ENCODE measurements at regions of chr9 and their contacts with region 1.

Region 1: DNA sequence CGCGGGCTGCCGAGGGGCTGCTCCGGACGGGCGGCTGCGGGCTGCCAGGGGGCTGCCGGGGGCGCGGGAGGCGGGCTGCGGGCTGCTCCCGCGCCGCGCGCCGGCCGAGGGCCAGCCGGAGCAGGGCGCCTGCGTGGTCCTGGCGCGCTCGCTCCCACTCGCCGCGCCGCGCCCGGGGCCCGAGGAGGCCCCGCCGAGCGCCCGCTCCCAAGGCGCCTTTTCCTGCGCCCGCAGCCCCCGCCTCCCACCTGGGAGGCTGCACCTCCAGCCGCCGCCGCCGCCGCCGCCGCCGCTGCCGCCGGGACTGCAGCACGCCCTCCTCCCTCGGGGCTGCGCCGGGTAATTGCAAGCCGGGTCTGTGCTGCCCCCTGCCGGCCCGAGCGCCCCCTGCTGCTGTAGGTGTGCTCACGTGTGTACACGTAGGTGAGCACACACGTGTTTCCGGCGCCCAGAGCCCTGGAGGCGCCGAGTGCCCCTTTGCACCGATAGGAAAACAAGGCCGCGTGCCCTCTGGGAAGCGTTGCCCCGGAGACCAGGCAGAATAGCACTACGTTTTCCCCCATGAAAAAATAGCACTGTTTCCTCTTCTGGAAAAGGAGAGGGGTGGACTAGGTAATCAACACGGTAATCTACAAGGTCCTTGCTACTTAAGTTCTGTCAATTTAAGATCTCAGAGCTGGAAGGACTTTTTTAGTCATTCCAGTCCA is at the start of gene EPB41L4B:
- DNase-seq: peak; percentile 86
- H3K4me3 Mint-ChIP-seq: peak within 1 kb of the TSS; percentile 79
- H3K27ac Mint-ChIP-seq: no peak within 1 kb of the TSS
- H3K4me1 Mint-ChIP-seq: peaks cover 8% of the 10 kb centered on the region
- H3K27me3 Mint-ChIP-seq: peaks cover 60% of the 10 kb centered on the region
- total RNA-seq, gene EPB41L4B: 1.5 and 1.6 TPM in 2 replicates

Region 2: GRCh38 chr9:107489687-107490605 is 1830.9 kb before region 1 on chr9 and contains the start of gene KLF4:
- intact Hi-C with region 1: loop called (anchors 10 kb)
- DNase-seq: peak; percentile 68
- H3K4me3 Mint-ChIP-seq: peak within 1 kb of the TSS; percentile 71
- H3K27ac Mint-ChIP-seq: no peak within 1 kb of the TSS
- H3K4me1 Mint-ChIP-seq: peaks cover 5% of the 10 kb centered on the region
- H3K27me3 Mint-ChIP-seq: peaks cover 64% of the 10 kb centered on the region
- total RNA-seq, gene KLF4: 0.52 and 1.4 TPM in 2 replicates

Region 3: GRCh38 chr9:108933718-108934322 is 387.1 kb before region 1 on chr9 and contains the start of gene ELP1:
- intact Hi-C with region 1: loop called (anchors 10 kb)
- DNase-seq: peak; percentile 89
- H3K4me3 Mint-ChIP-seq: peak within 1 kb of the TSS; percentile 98
- H3K27ac Mint-ChIP-seq: peak within 1 kb of the TSS; percentile 94
- H3K4me1 Mint-ChIP-seq: peaks cover 26% of the 10 kb centered on the region
- H3K27me3 Mint-ChIP-seq: no peaks in the 10 kb centered on the region
- total RNA-seq, gene ELP1: 31.7 and 32.7 TPM in 2 replicates

Region 4: GRCh38 chr9:109182940-109183798 is 137.7 kb before region 1 on chr9:
- intact Hi-C with region 1: loop called (anchors 5 kb)
- DNase-seq: peak; percentile 11
- H3K4me3 Mint-ChIP-seq: no peak overlapping the region
- H3K27ac Mint-ChIP-seq: no peak overlapping the region
- H3K4me1 Mint-ChIP-seq: peaks cover 9% of the 10 kb centered on the region
- H3K27me3 Mint-ChIP-seq: peaks cover 15% of the 10 kb centered on the region

Region 5: GRCh38 chr9:109244157-109245132 is 76.5 kb before region 1 on chr9:
- intact Hi-C with region 1: loop called (anchors 1 kb)
- DNase-seq: peak; percentile 50
- H3K4me3 Mint-ChIP-seq: no peak overlapping the region
- H3K27ac Mint-ChIP-seq: no peak overlapping the region
- H3K4me1 Mint-ChIP-seq: no peaks in the 10 kb centered on the region
- H3K27me3 Mint-ChIP-seq: peaks cover 20% of the 10 kb centered on the region

Region 6: GRCh38 chr9:109469646-109470358 is 148.9 kb after region 1 on chr9:
- intact Hi-C with region 1: loop called (anchors 10 kb)
- DNase-seq: peak; percentile 58
- H3K4me3 Mint-ChIP-seq: no peak overlapping the region
- H3K27ac Mint-ChIP-seq: no peak overlapping the region
- H3K4me1 Mint-ChIP-seq: peaks cover 38% of the 10 kb centered on the region
- H3K27me3 Mint-ChIP-seq: peaks cover 13% of the 10 kb centered on the region

Region 7: DNA sequence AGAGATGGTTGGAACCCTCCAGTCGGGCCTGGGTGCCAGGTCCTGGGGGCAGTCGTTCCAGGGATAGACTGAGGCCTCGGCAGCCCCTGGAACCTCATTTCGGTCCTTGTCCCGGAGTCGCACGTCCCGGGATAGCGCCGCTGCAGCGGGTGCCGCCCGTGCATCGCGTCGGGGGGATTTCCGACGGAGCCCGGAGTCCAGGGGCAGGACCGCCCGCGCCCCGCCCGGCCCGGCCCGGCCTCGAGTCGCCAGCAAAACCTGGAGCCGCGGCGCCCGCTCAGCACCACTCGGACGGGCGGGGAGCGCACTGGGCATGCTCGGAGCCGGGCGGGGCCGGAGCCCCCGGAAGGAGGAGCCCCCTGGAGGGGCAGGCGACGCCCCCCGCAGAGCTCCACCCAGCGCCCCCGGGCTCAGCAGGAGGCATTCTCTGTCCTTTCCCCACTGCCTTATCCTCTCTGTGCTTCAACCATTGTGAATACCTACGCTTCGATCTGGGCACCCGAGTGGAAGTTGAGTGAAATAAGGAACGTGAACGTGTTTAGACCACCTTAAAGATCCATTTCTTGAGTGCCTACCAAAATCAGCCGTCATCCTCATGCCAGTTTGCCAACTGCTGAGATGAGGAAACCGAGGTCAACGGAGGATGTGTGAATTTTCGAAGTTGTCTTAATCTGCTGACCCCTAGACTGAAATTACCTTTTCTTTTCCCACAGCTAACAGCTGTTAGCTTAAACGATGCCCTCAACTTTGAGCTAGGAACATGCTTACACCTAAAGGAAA is 178.9 kb after region 1 on chr9:
- intact Hi-C with region 1: loop called (anchors 10 kb)
- DNase-seq: no peak
- H3K4me3 Mint-ChIP-seq: no peak overlapping the region
- H3K27ac Mint-ChIP-seq: no peak overlapping the region
- H3K4me1 Mint-ChIP-seq: peaks cover 8% of the 10 kb centered on the region
- H3K27me3 Mint-ChIP-seq: peaks cover 70% of the 10 kb centered on the region

Measured in activated T-helper 2 cell treated with anti-CD3 and anti-CD28 coated beads, Interferon-gamma antibody, Interleukin-2, Interleukin-4, amounts not matched to agents 10 μg/mL and 5 μg/mL and 100 μg/mL, durations not matched to agents 14 hours and 24 hours and 36 hours (primary cell).